ENCODE measurements at regions of chr20 and their contacts with region 1.

Region 1: GRCh38 chr20:2206957-2207769 is 88.6 kb upstream of the TGM3 start:
- DNase-seq: peak; percentile 62
- ATAC-seq: peak; percentile 87
- H3K4me3 Mint-ChIP-seq: peak overlapping the region; percentile 66
- H3K27ac Mint-ChIP-seq: no peak overlapping the region
- H3K4me1 Mint-ChIP-seq: no peaks in the 10 kb centered on the region
- H3K27me3 Mint-ChIP-seq: peaks cover 32% of the 10 kb centered on the region

Region 2: GRCh38 chr20:2086177-2086979 is 120.8 kb before region 1 on chr20:
- CTCF ChIA-PET with region 1: no interaction called
- POLR2A ChIA-PET with region 1: no interaction called
- DNase-seq: no peak
- ATAC-seq: no peak
- H3K4me3 Mint-ChIP-seq: no peak overlapping the region
- H3K27ac Mint-ChIP-seq: no peak overlapping the region
- H3K4me1 Mint-ChIP-seq: no peaks in the 10 kb centered on the region
- H3K27me3 Mint-ChIP-seq: peaks cover 35% of the 10 kb centered on the region

Region 3: DNA sequence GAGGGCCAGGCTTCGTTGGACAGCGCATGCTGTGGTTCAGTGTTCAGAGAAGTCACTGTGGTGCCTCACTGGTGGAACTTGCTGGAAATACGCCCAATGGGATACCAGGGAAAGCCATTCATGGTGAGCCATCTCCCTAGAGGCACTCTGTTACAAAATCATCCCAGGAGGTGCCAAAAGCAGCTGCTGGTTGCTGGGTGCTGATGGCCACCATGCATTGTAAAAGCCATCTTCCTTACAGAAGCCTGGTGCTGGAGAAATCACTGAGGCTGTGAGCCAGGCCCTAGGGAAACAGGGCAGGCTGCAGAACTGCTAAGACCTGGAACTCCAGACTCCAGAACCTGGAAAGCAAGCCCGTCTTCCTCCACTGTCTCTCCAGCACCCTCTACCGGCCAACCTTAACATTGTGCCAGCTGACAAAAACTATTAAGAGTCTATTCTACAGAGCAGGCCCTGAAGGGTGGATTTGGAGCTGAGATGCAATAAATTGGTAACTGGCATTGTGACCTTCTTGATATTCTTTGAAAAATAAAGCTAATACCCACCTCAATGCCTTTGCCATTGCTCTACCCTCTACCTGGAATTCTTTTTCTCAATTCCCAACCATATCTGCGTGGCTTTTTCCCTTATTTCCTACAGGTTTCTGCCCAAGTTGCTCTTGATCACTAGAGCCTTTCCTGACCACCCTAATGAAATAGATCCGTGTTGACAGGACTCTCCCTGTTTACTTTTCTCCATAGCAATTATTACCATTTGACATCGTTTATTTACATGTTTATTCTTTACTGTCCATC is 245.0 kb after region 1 on chr20:
- CTCF ChIA-PET with region 1: interaction called, 33 read pairs
- POLR2A ChIA-PET with region 1: no interaction called
- DNase-seq: peak; percentile 81
- ATAC-seq: peak; percentile 55
- H3K4me3 Mint-ChIP-seq: no peak overlapping the region
- H3K27ac Mint-ChIP-seq: no peak overlapping the region
- H3K4me1 Mint-ChIP-seq: peaks cover 3% of the 10 kb centered on the region
- H3K27me3 Mint-ChIP-seq: peaks cover 8% of the 10 kb centered on the region

Measured in activated CD8-positive, alpha-beta T cell treated with anti-CD3 and anti-CD28 coated beads, Interleukin-2, amount 10 ng/mL, durations not matched to agents 7 days and 5 days (primary cell).